ENCODE measurements at regions of chr14 and their contacts with region 1.

Region 1: DNA sequence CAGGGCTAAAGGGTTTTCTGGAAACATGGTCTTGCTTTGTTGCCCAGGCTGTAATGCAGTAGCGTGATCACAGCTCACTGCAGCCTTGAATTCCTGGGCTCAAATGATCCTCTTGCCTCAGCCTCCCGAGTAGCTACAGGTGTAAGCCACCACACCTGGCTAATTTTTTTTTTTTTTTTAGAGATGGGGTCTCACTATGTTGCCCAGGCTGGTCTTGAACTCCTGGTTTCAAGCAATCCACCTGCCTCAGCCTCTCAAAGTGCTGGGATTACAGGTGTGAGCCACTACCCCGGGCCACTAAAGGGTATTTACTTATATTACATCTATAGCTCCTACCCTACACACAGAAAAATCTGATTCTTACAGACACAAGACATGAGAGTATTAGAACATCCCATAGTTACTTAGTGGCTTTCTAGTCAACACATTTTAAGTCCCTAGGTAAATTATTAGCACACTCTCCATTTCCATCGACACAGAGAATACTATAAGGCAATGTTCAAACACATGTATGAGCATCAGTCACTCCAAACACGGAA is 6.2 kb upstream of the DCAF11 start:
- DNase-seq: no peak
- H3K4me3 Mint-ChIP-seq: peak overlapping the region; percentile 50
- H3K27ac Mint-ChIP-seq: peak overlapping the region; percentile 97
- H3K4me1 Mint-ChIP-seq: peaks cover 10% of the 10 kb centered on the region
- H3K27me3 Mint-ChIP-seq: no peaks in the 10 kb centered on the region

Region 2: DNA sequence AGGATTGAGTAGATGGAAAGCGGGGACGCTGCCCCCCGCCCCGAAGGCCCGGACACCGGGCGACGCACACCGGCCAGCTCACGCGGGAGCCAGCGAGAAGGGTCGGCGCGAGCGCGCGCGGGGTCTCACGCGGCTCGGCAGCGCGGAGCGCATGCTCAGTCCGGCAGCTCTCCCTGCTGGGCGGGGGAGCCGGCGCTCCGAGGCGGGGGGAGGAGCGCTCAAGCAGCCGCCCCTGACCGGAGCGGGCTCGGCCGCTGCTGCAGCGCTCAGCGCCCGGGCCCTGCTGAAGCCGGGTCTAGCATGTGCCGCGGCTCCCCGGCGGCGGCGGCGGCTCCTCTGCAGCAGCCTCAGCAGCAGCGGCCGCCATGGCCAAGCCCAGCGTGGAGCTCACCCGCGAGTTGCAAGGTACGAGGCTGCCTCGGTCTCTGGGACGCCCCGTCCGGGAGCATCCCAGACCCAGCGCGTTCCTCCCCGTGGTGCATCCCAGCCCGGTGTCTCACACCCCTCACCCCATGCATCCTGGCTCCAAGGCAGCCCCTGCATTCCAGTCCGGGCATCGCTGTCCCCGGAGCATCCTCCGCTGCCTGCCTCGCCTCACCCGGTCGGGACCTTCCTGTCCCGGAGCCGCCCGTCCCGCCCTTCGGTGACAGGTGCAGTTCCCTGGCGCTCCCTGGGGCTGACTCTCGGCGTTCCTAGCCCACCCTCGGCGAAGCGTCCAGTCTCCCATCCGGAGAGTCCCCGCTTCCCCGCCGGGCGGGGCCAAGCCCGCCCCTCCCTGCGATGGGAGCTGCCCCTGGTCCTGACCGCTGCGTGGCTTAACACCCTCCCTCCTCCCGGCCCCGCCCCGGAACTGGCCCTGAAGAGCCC is 56.4 kb before region 1 on chr14 and contains the start of gene CARMIL3:
- CTCF ChIA-PET with region 1: interaction called, 237 read pairs
- intact Hi-C with region 1: loop called (anchors 1 kb)
- DNase-seq: peak; percentile 60
- H3K4me3 Mint-ChIP-seq: peak within 1 kb of the TSS; percentile 65
- H3K27ac Mint-ChIP-seq: peak within 1 kb of the TSS; percentile 28
- H3K4me1 Mint-ChIP-seq: peaks cover 18% of the 10 kb centered on the region
- H3K27me3 Mint-ChIP-seq: peaks cover 2% of the 10 kb centered on the region
- total RNA-seq, gene CARMIL3: 0.48 to 0.99 TPM

Region 3: DNA sequence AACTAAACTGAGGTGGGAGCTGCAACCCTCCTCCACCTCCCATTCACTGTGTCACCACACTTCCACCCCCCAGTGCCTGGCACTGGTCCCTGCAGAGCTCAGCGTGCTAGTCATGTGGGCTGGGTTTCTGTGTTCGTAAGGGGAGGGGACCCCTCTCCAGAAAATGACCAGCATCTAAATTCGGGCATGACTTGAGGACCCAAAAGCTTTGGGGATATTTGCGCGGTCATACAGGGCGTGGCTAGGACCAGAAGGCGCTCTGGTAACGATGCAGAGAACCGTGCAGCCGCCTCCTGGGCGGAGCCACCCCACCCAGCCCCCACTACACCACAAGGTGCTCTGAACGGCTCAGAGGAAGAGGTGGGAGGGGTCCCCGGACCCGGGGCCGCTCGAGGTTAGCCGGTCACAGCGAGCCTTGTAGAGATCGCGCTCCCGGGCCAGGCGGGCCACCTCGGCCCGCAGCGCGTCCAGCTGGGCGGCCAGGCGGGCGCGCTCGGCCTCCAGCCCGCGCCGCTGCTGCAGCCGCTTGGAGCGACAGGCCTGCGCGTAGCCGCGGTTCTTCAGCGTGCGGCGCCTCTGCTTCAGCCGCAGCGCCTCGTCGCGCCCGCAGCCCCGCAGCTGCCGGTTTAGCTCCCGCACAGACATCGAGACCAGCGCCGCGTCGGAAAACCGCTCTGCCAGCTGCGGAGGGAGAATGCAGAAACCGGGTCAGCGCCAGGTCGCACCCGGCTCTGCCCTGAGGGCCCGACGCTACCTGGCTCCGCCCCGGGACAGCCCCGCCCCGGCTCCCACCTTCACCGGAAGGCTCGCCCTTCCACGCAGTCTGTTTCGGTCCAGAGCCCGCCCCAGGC is 27.3 kb before region 1 on chr14:
- CTCF ChIA-PET with region 1: interaction called, 50 read pairs
- intact Hi-C with region 1: no loop called
- DNase-seq: peak; percentile 74
- H3K4me3 Mint-ChIP-seq: peak overlapping the region; percentile 74
- H3K27ac Mint-ChIP-seq: no peak overlapping the region
- H3K4me1 Mint-ChIP-seq: peaks cover 15% of the 10 kb centered on the region
- H3K27me3 Mint-ChIP-seq: no peaks in the 10 kb centered on the region

Region 4: DNA sequence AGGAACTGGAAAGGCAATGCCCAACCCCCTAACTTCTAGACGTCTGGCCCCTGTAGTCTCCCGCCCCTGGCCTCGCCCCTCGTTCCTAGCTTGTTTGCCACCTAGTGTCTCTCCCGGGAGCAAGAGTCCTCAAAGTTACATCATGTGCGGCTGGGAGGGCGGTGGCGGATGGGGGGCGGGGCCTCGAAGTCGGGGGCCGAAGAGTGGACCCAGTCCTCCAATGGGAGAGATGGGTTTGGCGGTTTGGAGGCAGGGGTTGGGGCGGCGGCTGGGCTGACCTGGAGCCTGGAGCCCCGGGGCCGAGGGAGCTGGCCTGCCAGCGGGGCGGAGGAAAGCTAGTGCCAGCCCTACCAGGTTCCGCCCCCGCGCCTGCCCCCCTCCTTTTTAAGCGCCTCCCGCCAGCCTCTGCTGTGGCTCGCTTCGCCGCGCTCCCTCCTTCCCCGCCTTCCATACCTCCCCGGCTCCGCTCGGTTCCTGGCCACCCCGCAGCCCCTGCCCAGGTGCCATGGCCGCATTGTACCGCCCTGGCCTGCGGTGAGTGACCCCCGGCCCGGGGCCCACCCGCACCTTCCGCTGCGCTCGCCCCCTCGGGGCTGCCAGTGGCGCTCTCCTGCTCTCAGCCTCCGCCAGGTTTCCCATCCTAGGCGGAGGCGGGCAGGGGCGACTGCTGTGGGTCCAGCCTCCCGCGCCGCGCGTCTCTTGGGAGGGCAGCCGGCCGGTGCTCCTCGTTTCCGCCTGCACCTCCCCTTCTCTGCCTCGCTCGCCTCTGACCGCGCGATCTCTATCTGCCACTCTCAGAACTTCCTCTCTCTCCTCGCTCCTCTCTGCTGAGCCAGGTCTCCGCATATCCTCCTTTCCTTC is 14.3 kb before region 1 on chr14 and contains the start of gene PCK2:
- CTCF ChIA-PET with region 1: interaction called, 226 read pairs
- intact Hi-C with region 1: loop called (anchors 1 kb)
- DNase-seq: peak; percentile 94
- H3K4me3 Mint-ChIP-seq: peak within 1 kb of the TSS; percentile 99
- H3K27ac Mint-ChIP-seq: peak within 1 kb of the TSS; percentile 98
- H3K4me1 Mint-ChIP-seq: peaks cover 32% of the 10 kb centered on the region
- H3K27me3 Mint-ChIP-seq: no peaks in the 10 kb centered on the region
- total RNA-seq, gene PCK2: 117 TPM

Region 5: DNA sequence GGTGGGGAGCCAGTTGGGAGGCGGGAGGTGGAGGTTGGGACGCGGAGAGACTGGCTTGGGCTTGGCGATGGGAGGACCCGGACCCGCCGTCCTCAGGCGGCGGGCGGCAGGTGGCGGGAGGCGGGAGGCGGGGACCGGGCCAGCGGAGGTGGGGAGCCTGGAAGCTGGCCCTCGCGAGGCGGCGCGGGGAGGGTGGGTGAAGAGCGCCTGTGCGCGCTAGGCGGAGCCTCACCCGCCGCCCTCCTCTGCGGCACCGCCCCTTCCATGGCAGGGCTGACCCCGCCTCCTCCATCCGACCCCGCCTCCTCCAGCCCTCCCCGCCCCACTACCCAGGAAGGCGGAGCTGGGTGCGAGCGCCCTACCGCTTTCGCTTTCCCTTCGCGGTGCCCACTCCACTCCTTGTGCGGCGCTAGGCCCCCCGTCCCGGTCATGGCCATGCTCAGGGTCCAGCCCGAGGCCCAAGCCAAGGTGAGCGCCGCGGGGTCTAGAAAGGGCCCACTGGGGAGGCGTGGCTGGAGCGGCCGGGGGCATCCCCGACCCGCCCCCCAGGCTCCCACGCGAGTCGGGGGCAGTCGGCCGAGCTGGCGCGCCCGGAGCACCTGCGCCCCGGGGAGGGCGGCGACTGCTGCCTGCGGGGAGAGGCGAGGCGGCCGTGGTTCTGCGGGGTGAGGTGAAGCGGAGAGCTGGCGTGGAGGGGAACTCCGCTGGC is 27.6 kb after region 1 on chr14 and contains the start of gene PSME1:
- CTCF ChIA-PET with region 1: interaction called, 43 read pairs
- intact Hi-C with region 1: no loop called
- DNase-seq: peak; percentile 97
- H3K4me3 Mint-ChIP-seq: peak within 1 kb of the TSS; percentile 86
- H3K27ac Mint-ChIP-seq: peak within 1 kb of the TSS; percentile 93
- H3K4me1 Mint-ChIP-seq: peaks cover 52% of the 10 kb centered on the region
- H3K27me3 Mint-ChIP-seq: no peaks in the 10 kb centered on the region
- total RNA-seq, gene PSME1: 406 to 416 TPM

Region 6: GRCh38 chr14:24171422-24172260 is 63.2 kb after region 1 on chr14 and contains the start of gene REC8:
- CTCF ChIA-PET with region 1: no interaction called
- intact Hi-C with region 1: no loop called
- DNase-seq: peak; percentile 72
- H3K4me3 Mint-ChIP-seq: peak within 1 kb of the TSS; percentile 70
- H3K27ac Mint-ChIP-seq: peak within 1 kb of the TSS; percentile 75
- H3K4me1 Mint-ChIP-seq: peaks cover 22% of the 10 kb centered on the region
- H3K27me3 Mint-ChIP-seq: no peaks in the 10 kb centered on the region
- total RNA-seq, gene REC8: 19.3 to 22.3 TPM

Region 7: GRCh38 chr14:24206260-24207103 is 98.1 kb after region 1 on chr14:
- CTCF ChIA-PET with region 1: no interaction called
- intact Hi-C with region 1: no loop called
- DNase-seq: no peak
- H3K4me3 Mint-ChIP-seq: no peak overlapping the region
- H3K27ac Mint-ChIP-seq: peak overlapping the region; percentile 13
- H3K4me1 Mint-ChIP-seq: peaks cover 25% of the 10 kb centered on the region
- H3K27me3 Mint-ChIP-seq: no peaks in the 10 kb centered on the region

Region 8: GRCh38 chr14:24289649-24290249 is 181.3 kb after region 1 on chr14:
- CTCF ChIA-PET with region 1: no interaction called
- intact Hi-C with region 1: no loop called
- DNase-seq: peak; percentile 93
- H3K4me3 Mint-ChIP-seq: no peak overlapping the region
- H3K27ac Mint-ChIP-seq: peak overlapping the region; percentile 75
- H3K4me1 Mint-ChIP-seq: peaks cover 25% of the 10 kb centered on the region
- H3K27me3 Mint-ChIP-seq: no peaks in the 10 kb centered on the region

Region 9: GRCh38 chr14:24734878-24735500 is 626.6 kb after region 1 on chr14:
- CTCF ChIA-PET with region 1: no interaction called
- intact Hi-C with region 1: no loop called
- DNase-seq: peak; percentile 45
- H3K4me3 Mint-ChIP-seq: no peak overlapping the region
- H3K27ac Mint-ChIP-seq: no peak overlapping the region
- H3K4me1 Mint-ChIP-seq: no peaks in the 10 kb centered on the region
- H3K27me3 Mint-ChIP-seq: peaks cover 7% of the 10 kb centered on the region